ENCODE measurements at regions of chr7 and their contacts with region 1.

Region 1: DNA sequence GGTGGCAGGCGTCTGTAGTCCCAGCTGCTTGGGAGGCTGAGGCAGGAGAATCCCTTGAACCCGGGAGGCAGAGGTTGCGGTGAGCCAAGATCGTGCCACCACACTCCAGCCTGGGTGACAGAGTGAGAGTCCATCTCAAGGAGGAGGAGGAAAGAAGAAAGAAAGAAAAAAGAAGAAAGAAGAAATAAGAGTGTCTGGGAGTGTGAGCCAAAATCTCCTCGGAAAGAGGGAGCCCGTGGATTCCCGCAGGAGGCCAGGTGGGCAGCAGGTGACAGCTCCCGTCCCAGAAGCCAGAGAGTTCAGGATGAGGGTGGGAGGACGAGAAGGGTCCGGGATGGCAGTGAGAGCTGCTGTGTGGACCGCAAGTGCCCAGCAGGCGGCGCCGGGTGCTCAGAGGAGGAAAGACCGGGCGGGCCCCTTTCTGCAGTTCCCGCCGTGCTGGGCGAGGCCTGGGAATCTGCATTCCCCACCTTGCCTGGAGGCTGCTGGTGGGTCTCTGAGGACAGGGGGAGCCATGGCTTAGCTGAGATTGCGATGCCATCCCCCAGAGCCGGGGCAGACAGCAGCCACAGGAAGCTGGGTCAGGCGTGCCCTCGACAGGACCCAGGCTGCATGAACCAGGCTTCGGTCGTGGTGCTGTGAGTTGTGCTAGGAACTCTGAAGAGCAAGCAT is 17.1 kb upstream of the AMZ1 start:
- DNase-seq: no peak
- ATAC-seq: peak; percentile 97
- H3K4me3 ChIP-seq: no peak overlapping the region
- H3K27ac ChIP-seq: no peak overlapping the region
- H3K4me1 ChIP-seq: peaks cover 4% of the 10 kb centered on the region; the same call in 1 of the 2 replicates
- H3K27me3 ChIP-seq: no peaks in the 10 kb centered on the region
- CTCF ChIP-seq: peak; percentile 88 to 97 (median 94)
- EP300 ChIP-seq: no peak
- POLR2A ChIP-seq: no peak
- RAD21 ChIP-seq: peak; percentile 95

Region 2: GRCh38 chr7:2567679-2568278 is 103.1 kb before region 1 on chr7:
- CTCF ChIA-PET with region 1: interaction called, 5 read pairs
- POLR2A ChIA-PET with region 1: no interaction called
- RAD21 ChIA-PET with region 1: no interaction called
- SMC1A ChIA-PET with region 1: no interaction called
- in situ Hi-C with region 1: no loop called
- intact Hi-C with region 1: loop called (anchors 5 kb)
- DNase-seq: no peak
- ATAC-seq: peak; percentile 69
- H3K4me3 ChIP-seq: 0 out of 2 replicates have a peak overlapping the region, but pooled peaks have one; percentile 54
- H3K27ac ChIP-seq: no peak overlapping the region
- H3K4me1 ChIP-seq: peaks cover 23% of the 10 kb centered on the region
- H3K27me3 ChIP-seq: no peaks in the 10 kb centered on the region
- CTCF ChIP-seq: peak; percentile 43 to 59 (median 55)
- EP300 ChIP-seq: no peak
- POLR2A ChIP-seq: no peak
- RAD21 ChIP-seq: peak; percentile 56

Region 3: GRCh38 chr7:2586326-2587020 is 84.4 kb before region 1 on chr7:
- CTCF ChIA-PET with region 1: no interaction called
- POLR2A ChIA-PET with region 1: no interaction called
- RAD21 ChIA-PET with region 1: no interaction called
- SMC1A ChIA-PET with region 1: no interaction called
- in situ Hi-C with region 1: no loop called
- intact Hi-C with region 1: no loop called
- DNase-seq: no peak
- ATAC-seq: no peak
- H3K4me3 ChIP-seq: no peak overlapping the region
- H3K27ac ChIP-seq: no peak overlapping the region
- H3K4me1 ChIP-seq: no peaks in the 10 kb centered on the region
- H3K27me3 ChIP-seq: no peaks in the 10 kb centered on the region
- CTCF ChIP-seq: no peak
- EP300 ChIP-seq: no peak
- POLR2A ChIP-seq: no peak
- RAD21 ChIP-seq: no peak

Region 4: DNA sequence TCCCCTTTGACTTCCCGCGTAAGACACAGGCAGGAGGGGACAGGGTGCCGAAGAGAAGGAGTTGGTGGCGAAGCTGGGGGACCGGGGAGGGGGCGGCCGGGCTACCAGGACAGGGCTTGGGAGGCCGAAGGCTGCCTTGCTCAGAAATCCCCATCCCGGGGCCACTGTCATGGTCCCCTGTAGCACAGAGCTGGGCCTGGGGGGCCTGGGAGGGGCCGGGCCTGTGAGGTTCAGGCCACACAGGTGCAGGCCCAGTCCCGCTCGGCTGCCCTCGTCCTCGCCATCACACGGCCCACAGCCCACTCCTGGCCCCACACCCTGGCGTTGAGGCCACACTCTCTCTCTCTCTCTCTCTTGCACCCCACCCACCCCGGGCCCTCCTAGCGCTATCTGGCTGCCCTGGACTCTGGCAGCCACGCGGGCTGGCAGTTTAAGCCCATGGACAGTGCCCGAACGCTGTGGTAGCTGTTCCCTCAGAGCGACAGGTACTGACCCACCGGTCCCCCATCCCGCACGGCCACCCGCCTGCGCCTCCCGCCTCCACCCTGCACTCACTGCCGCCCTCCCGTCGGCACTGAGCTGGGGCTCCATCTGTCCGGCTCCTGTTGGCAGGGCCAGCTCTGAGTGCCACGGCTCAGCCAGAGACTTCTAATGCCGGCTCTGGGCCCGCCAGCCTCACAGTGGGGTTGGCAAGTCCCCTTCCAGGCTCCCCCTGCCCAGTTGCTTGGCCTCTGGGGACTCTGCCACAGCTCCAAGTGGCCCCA is 11.1 kb before region 1 on chr7:
- CTCF ChIA-PET with region 1: no interaction called
- POLR2A ChIA-PET with region 1: no interaction called
- RAD21 ChIA-PET with region 1: no interaction called
- SMC1A ChIA-PET with region 1: no interaction called
- in situ Hi-C with region 1: no loop called
- intact Hi-C with region 1: no loop called
- DNase-seq: no peak
- ATAC-seq: no peak
- H3K4me3 ChIP-seq: no peak overlapping the region
- H3K27ac ChIP-seq: no peak overlapping the region
- H3K4me1 ChIP-seq: no peaks in the 10 kb centered on the region
- H3K27me3 ChIP-seq: no peaks in the 10 kb centered on the region
- CTCF ChIP-seq: no peak
- EP300 ChIP-seq: no peak
- POLR2A ChIP-seq: no peak
- RAD21 ChIP-seq: no peak

Region 5: DNA sequence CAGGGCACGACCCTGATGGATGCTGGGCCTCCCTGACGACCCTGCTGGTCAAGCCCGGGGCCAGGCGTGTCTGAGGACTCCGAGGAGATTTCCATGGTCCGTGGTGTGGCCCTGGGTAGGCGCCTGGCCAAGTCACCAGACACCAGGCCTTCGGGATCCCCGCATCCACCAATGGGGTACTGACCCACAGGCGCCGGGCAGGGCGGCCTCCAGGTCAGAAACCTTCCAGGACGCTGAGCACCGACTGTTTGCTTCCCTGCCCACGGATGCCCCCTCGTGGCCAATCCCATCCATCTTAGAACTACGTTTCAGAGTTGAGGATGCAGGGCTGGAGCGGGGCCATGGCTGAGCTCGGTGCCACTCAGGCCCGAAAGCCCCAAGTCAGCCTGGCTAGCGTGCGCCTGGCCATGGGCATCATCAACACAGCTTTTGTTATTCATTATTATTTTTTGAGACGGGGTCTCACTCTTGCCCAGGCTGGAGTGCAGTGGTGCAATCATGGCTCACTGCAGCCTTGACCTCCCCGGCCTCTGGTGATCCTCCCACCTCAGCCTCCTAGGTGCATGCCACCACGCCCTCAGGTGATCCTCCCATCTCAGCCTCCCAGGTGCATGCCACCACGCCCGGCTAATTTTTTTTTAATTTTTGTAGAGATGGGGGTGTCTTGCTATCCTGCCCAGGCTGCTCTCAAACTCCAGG is 10.1 kb after region 1 on chr7:
- CTCF ChIA-PET with region 1: interaction called, 17 read pairs
- POLR2A ChIA-PET with region 1: no interaction called
- RAD21 ChIA-PET with region 1: interaction called, 6 read pairs
- SMC1A ChIA-PET with region 1: interaction called, 6 read pairs
- in situ Hi-C with region 1: no loop called
- intact Hi-C with region 1: no loop called
- DNase-seq: no peak
- ATAC-seq: peak; percentile 91
- H3K4me3 ChIP-seq: no peak overlapping the region
- H3K27ac ChIP-seq: no peak overlapping the region
- H3K4me1 ChIP-seq: no peaks in the 10 kb centered on the region
- H3K27me3 ChIP-seq: no peaks in the 10 kb centered on the region; a peak in 1 of 4 replicates
- CTCF ChIP-seq: peak; percentile 64 to 72 (median 72)
- EP300 ChIP-seq: no peak
- POLR2A ChIP-seq: no peak
- RAD21 ChIP-seq: peak; percentile 70

Region 6: GRCh38 chr7:2698581-2699288 is 27.9 kb after region 1 on chr7:
- CTCF ChIA-PET with region 1: interaction called, 15 read pairs
- POLR2A ChIA-PET with region 1: interaction called, 4 read pairs
- RAD21 ChIA-PET with region 1: interaction called, 6 read pairs
- SMC1A ChIA-PET with region 1: interaction called, 10 read pairs
- in situ Hi-C with region 1: no loop called
- intact Hi-C with region 1: no loop called
- DNase-seq: peak; percentile 93
- ATAC-seq: peak; percentile 96
- H3K4me3 ChIP-seq: 0 out of 2 replicates have a peak overlapping the region, but pooled peaks have one; percentile 32
- H3K27ac ChIP-seq: peak overlapping the region; percentile 38; the same call in 1 of the 2 replicates
- H3K4me1 ChIP-seq: peaks cover 21% of the 10 kb centered on the region
- H3K27me3 ChIP-seq: no peaks in the 10 kb centered on the region
- CTCF ChIP-seq: no peak
- EP300 ChIP-seq: peak; percentile 88 to 98
- POLR2A ChIP-seq: no peak
- RAD21 ChIP-seq: 0 out of 2 replicates have a peak, but pooled peaks have one; percentile 5

Region 7: GRCh38 chr7:2720582-2721491 is 50.0 kb after region 1 on chr7:
- CTCF ChIA-PET with region 1: interaction called, 11 read pairs
- POLR2A ChIA-PET with region 1: no interaction called
- RAD21 ChIA-PET with region 1: interaction called, 6 read pairs
- SMC1A ChIA-PET with region 1: interaction called, 113 read pairs
- in situ Hi-C with region 1: no loop called
- intact Hi-C with region 1: no loop called
- DNase-seq: no peak
- ATAC-seq: peak; percentile 79
- H3K4me3 ChIP-seq: no peak overlapping the region
- H3K27ac ChIP-seq: no peak overlapping the region
- H3K4me1 ChIP-seq: peaks cover 22% of the 10 kb centered on the region
- H3K27me3 ChIP-seq: no peaks in the 10 kb centered on the region
- CTCF ChIP-seq: peak in 1 of 3 experiments; percentile 37; a peak in 1 of 6 replicates
- EP300 ChIP-seq: no peak
- POLR2A ChIP-seq: no peak
- RAD21 ChIP-seq: no peak

Region 8: DNA sequence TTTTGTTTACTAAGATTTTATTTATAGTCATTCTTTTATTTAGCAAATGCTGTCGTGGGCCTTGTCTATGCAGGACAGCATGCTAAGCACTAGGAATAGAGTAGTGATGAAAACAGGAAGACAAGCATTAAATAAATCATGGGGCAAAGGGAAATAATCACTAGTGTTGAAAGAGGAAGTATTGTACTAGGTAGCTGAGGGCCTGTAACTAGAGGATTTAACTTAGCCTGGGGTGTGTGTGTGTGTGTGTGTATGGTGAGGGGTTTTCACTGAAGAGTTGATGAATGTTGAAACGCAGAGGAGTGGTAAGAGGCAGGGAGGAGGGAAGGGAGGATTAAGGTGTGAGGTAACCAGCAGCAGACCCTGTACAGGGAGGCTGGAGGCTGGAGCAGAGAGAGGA is 1076.6 kb after region 1 on chr7:
- CTCF ChIA-PET with region 1: no interaction called
- POLR2A ChIA-PET with region 1: no interaction called
- RAD21 ChIA-PET with region 1: no interaction called
- SMC1A ChIA-PET with region 1: no interaction called
- in situ Hi-C with region 1: no loop called
- intact Hi-C with region 1: no loop called
- DNase-seq: no peak
- ATAC-seq: no peak
- H3K4me3 ChIP-seq: no peak overlapping the region
- H3K27ac ChIP-seq: no peak overlapping the region
- H3K4me1 ChIP-seq: no peaks in the 10 kb centered on the region
- H3K27me3 ChIP-seq: no peaks in the 10 kb centered on the region
- CTCF ChIP-seq: no peak
- EP300 ChIP-seq: no peak
- POLR2A ChIP-seq: no peak
- RAD21 ChIP-seq: no peak

Measured in GM12878 (cell line).